Activated CD8-positive, alpha-beta memory T cell treated with anti-CD3 and anti-CD28 coated beads, Interleukin-2, amount 10 ng/mL, durations not matched to agents 7 days and 5 days (primary cell): ENCODE measurements at regions of chr5 and their contacts with region 1.

Region 1: GRCh38 chr5:132883261-132883834 is 9.9 kb downstream of the LEAP2 start:
- DNase-seq: no peak
- ATAC-seq: peak; percentile 68
- H3K4me3 Mint-ChIP-seq: no peak overlapping the region
- H3K27ac Mint-ChIP-seq: peak overlapping the region; percentile 18
- H3K4me1 Mint-ChIP-seq: peaks cover 12% of the 10 kb centered on the region
- H3K27me3 Mint-ChIP-seq: no peaks in the 10 kb centered on the region

Region 2: DNA sequence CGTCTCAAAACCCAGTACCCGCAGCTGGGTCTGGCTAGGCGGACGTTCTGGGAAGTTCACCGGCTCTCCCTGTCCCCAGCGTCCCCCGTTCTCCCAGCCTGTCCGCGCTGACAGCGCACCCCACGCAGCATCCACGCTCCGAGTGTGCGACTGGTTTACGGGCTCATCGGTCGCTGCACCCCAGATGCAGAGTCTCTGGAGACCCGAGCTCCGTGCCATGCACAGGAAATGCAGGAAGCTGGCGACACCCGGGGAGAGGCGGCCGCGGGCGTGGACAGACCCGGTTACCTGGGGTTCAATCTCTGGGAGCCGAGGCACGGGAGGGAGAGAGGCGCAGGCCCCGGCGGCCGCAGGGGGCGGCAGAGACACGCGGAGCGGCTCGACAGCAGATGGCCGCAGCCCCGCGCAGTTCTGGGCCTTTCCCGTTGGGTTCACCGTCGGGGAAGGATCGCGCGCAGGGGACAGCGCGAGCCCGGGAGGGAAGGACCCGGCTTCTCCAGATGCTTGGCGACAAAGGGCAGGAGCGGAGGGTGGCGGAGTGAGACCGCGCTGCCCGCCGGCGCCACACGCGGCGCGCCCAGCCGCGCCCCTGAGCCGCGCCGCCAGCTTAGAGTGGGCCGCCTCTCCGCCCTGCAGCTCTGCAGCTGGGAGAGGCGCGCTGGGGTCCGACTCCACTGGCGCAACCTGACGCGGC is 53.5 kb before region 1 on chr5:
- CTCF ChIA-PET with region 1: interaction called, 23 read pairs
- DNase-seq: peak; percentile 80
- ATAC-seq: peak; percentile 90
- H3K4me3 Mint-ChIP-seq: peak overlapping the region; percentile 79
- H3K27ac Mint-ChIP-seq: peak overlapping the region; percentile 73
- H3K4me1 Mint-ChIP-seq: peaks cover 19% of the 10 kb centered on the region
- H3K27me3 Mint-ChIP-seq: peaks cover 49% of the 10 kb centered on the region

Region 3: GRCh38 chr5:132866342-132867045 is 16.9 kb before region 1 on chr5 and contains the starts of genes GDF9 and UQCRQ:
- CTCF ChIA-PET with region 1: interaction called, 19 read pairs
- DNase-seq: peak; percentile 97
- ATAC-seq: peak; percentile 99
- H3K4me3 Mint-ChIP-seq: peak within 1 kb of the TSS; percentile 93
- H3K27ac Mint-ChIP-seq: peak within 1 kb of the TSS; percentile 99
- H3K4me1 Mint-ChIP-seq: peaks cover 28% of the 10 kb centered on the region
- H3K27me3 Mint-ChIP-seq: peaks cover 3% of the 10 kb centered on the region
- total RNA-seq, gene GDF9: 0.26 to 0.67 TPM
- total RNA-seq, gene UQCRQ: 344 to 446 TPM